ENCODE measurements at regions of chr9 and their contacts with region 1.

Region 1: GRCh38 chr9:12798066-12798770 is 23.4 kb downstream of the LURAP1L start:
- DNase-seq: no peak
- CTCF ChIP-seq: no peak

Region 2: GRCh38 chr9:11992866-11993265 is 805.4 kb before region 1 on chr9:
- CTCF ChIA-PET with region 1: no interaction called
- POLR2A ChIA-PET with region 1: no interaction called
- DNase-seq: no peak
- CTCF ChIP-seq: no peak

Region 3: GRCh38 chr9:12819436-12820185 is 21.4 kb after region 1 on chr9:
- CTCF ChIA-PET with region 1: interaction called, 12 read pairs
- POLR2A ChIA-PET with region 1: no interaction called
- DNase-seq: peak; percentile 32
- CTCF ChIP-seq: peak; percentile 58

Region 4: DNA sequence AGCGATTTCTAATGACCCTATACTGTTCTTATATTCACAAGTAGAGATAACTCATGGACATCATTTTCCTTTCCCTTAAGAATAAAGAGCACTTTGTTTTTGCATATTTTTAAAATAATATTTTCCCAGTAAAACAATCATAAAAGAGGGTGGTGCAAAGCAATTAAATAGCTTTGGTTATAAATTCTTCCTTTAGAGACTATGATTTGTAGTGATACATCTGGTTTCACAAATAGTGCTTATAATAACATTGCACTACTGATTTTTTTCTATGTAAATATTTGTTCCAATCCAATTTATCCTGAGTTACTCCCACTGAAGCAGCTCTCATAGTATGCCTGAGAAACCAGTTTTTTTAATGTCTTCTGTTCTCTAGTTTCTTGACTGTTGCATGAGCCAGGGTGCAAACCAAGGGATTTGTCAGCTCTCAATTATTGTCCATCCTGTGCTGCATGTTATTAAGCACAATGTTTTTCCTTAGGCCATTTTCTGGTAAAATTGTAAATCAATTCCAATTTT is 51.3 kb after region 1 on chr9:
- CTCF ChIA-PET with region 1: no interaction called
- POLR2A ChIA-PET with region 1: no interaction called
- DNase-seq: no peak
- CTCF ChIP-seq: no peak

Region 5: DNA sequence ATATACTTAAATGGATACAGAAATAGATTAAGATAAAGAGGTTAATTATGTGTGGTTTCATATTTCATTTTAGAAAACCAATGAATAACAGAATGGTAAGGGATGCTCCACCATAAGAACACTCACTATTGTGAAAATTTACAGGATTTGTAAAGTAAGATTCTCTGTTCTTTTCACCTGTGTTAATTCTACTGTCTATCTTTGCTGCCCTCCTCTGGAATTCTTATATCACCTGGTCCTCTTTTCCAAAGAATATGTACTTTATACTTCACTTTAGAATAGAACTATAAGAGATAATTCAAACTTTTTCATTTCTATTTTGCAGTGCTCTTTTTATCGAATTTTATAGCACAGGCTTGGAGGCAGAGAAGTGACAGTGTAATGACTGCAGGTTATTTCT is 190.0 kb after region 1 on chr9:
- CTCF ChIA-PET with region 1: no interaction called
- POLR2A ChIA-PET with region 1: no interaction called
- DNase-seq: no peak
- CTCF ChIP-seq: no peak

Measured in GM10248 (cell line).